Activated naive CD4-positive, alpha-beta T cell treated with anti-CD3 and anti-CD28 coated beads for 36 hours (primary cell): ENCODE measurements at regions of chr4 and their contacts with region 1.

Region 1: DNA sequence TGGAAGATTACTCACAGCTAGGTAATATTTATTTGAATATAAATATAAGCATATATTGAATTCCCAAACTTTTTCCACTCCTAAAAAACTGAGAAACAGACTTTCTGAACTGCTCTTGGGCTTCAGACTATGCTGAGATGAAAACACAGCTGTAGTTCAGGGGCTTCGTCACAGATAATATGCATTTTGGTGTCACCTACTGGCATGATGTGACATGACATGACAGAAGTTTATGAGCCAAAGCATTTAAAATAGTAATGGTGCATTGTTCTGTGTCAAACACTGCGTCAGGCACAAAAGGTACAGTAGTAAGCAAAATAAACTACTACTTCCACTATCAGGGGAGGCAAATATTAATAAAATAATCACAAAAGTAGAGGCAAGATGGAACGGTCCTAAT is 171.3 kb downstream of the BTC start:
- DNase-seq: peak; percentile 47
- H3K4me3 Mint-ChIP-seq: no peak overlapping the region
- H3K27ac Mint-ChIP-seq: no peak overlapping the region
- H3K4me1 Mint-ChIP-seq: peaks cover 29% of the 10 kb centered on the region
- H3K27me3 Mint-ChIP-seq: no peaks in the 10 kb centered on the region

Region 2: GRCh38 chr4:74235135-74235534 is 387.9 kb before region 1 on chr4:
- CTCF ChIA-PET with region 1: no interaction called
- intact Hi-C with region 1: no loop called
- DNase-seq: no peak
- H3K4me3 Mint-ChIP-seq: no peak overlapping the region
- H3K27ac Mint-ChIP-seq: no peak overlapping the region
- H3K4me1 Mint-ChIP-seq: peaks cover 16% of the 10 kb centered on the region
- H3K27me3 Mint-ChIP-seq: no peaks in the 10 kb centered on the region

Region 3: DNA sequence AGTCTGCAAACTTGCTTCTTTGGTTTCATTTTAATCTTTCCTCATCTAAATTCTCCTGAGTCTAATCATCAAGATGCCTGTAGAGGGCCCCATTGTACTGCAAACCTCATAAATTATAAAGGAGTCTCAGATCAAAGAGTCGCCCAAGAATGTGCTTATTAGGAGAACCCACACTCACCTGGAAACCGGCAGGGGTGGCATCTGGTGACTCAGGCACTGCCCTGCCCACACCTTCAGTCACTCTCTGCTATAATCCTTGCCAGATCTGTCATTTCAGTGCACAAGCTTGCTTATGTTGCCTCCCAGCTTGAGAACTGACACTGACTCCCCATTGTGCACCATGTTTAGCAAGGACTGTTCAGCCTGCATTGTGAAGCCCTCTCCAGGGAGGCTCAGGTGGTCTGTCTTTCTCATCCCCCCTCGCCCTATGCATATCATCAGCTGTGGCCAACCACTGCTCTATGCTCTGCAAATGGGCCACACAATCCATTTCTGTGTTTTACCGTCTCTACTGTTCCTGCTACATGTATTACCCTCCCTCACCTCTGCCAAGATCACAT is 302.4 kb before region 1 on chr4:
- CTCF ChIA-PET with region 1: interaction called, 4 read pairs
- intact Hi-C with region 1: loop called (anchors 2 kb)
- DNase-seq: peak; percentile 56
- H3K4me3 Mint-ChIP-seq: no peak overlapping the region
- H3K27ac Mint-ChIP-seq: no peak overlapping the region
- H3K4me1 Mint-ChIP-seq: no peaks in the 10 kb centered on the region
- H3K27me3 Mint-ChIP-seq: peaks cover 19% of the 10 kb centered on the region

Region 4: DNA sequence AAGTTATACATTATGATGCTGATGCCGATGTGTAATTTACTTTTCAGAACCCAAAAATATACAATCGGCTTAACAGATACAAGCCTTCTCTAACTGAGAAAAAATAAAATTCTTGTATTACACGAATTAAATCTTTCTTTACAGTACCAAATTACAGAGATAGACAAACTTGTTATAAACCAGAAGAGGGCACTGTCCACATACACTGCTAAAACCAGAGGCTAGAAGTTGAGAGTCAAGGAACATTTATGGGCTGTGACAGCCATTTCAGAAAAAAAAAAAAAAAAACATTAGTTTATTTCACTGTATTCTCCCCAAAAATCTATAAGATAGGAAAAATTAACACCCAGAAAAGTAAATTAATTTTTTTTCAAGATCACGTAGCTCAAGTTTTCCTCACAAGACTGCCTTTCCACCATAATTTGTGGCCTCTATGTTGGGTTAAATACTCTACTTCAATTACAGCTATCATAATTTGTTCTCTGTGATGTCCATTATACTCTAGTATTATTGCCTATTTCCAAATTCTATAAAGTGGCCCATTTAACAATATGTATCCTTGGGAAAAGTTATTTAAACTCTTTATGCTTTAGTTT is 246.1 kb before region 1 on chr4:
- CTCF ChIA-PET with region 1: interaction called, 15 read pairs
- intact Hi-C with region 1: loop called (anchors 1 kb)
- DNase-seq: no peak
- H3K4me3 Mint-ChIP-seq: no peak overlapping the region
- H3K27ac Mint-ChIP-seq: no peak overlapping the region
- H3K4me1 Mint-ChIP-seq: no peaks in the 10 kb centered on the region
- H3K27me3 Mint-ChIP-seq: peaks cover 4% of the 10 kb centered on the region

Region 5: GRCh38 chr4:74531963-74532794 is 90.9 kb before region 1 on chr4:
- CTCF ChIA-PET with region 1: interaction called, 4 read pairs
- intact Hi-C with region 1: loop called (anchors 2 kb)
- DNase-seq: peak; percentile 6
- H3K4me3 Mint-ChIP-seq: no peak overlapping the region
- H3K27ac Mint-ChIP-seq: no peak overlapping the region
- H3K4me1 Mint-ChIP-seq: no peaks in the 10 kb centered on the region
- H3K27me3 Mint-ChIP-seq: peaks cover 4% of the 10 kb centered on the region

Region 6: GRCh38 chr4:74640111-74640903 is 17.3 kb after region 1 on chr4:
- CTCF ChIA-PET with region 1: no interaction called
- intact Hi-C with region 1: no loop called
- DNase-seq: no peak
- H3K4me3 Mint-ChIP-seq: no peak overlapping the region
- H3K27ac Mint-ChIP-seq: no peak overlapping the region
- H3K4me1 Mint-ChIP-seq: no peaks in the 10 kb centered on the region
- H3K27me3 Mint-ChIP-seq: peaks cover 4% of the 10 kb centered on the region

Region 7: DNA sequence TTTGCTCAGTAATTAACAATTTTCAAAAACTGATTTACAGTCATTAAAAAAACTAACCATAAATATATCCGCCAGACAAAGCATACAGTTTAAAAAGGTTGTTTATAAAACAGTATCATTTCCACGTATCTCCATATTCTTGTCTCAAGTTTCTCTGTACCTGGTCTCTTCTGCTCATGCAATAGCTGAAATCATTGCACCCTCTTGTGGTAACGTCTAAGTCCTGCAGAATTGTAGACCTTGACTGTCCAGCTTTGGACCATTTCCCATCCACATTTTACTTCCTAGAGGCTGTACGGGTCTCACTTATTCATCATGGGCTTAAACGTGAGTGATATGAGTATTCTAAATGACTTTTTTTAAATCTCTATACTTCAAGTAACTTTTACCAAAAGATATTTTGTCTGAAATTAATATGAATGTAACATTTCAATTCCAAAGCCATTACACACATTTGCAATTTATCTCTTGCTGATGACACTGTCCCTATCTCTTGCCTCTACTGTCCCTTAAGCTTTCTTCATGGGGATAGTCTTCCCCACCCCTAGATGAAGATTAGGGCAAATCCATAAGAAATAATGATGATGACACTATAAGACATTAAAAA is 52.7 kb after region 1 on chr4:
- CTCF ChIA-PET with region 1: interaction called, 3 read pairs
- intact Hi-C with region 1: loop called (anchors 2 kb)
- DNase-seq: peak; percentile 19
- H3K4me3 Mint-ChIP-seq: no peak overlapping the region
- H3K27ac Mint-ChIP-seq: no peak overlapping the region
- H3K4me1 Mint-ChIP-seq: peaks cover 4% of the 10 kb centered on the region
- H3K27me3 Mint-ChIP-seq: peaks cover 5% of the 10 kb centered on the region